H1 (cell line): ENCODE measurements at regions of chr4 and their contacts with region 1.

Region 1: GRCh38 chr4:90419124-90419711 is 292.0 kb downstream of the CCSER1 start:
- DNase-seq: no peak
- H3K4me3 ChIP-seq: no peak overlapping the region
- H3K27ac ChIP-seq: no peak overlapping the region
- H3K4me1 ChIP-seq: no peaks in the 10 kb centered on the region
- H3K27me3 ChIP-seq: no peaks in the 10 kb centered on the region
- CTCF ChIP-seq: peak in 2 of 3 experiments; percentile 25 to 62; a peak in 2 of 4 replicates
- EP300 ChIP-seq: no peak
- POLR2A ChIP-seq: no peak
- RAD21 ChIP-seq: peak; percentile 78 to 85

Region 2: DNA sequence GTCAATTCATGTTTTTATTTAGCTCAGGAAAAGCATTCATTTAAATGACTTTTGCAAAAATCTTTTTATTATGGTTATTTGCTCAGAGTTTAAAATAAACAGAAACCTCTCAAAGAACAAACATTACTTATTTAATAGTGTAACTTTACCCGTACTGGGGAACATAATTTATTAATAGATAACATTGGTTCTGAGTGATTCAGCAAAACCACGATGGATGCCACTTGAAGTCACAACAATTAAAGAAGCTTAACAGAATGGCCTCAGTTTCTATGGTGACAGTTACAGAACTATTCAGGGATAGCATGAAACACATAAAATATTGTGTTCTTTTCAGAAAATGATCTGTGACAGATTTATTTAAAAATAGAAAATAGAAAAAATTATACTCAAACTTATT is 76.7 kb after region 1 on chr4:
- CTCF ChIA-PET with region 1: no interaction called
- POLR2A ChIA-PET with region 1: no interaction called
- DNase-seq: no peak
- H3K4me3 ChIP-seq: no peak overlapping the region
- H3K27ac ChIP-seq: no peak overlapping the region
- H3K4me1 ChIP-seq: no peaks in the 10 kb centered on the region
- H3K27me3 ChIP-seq: no peaks in the 10 kb centered on the region
- CTCF ChIP-seq: no peak
- EP300 ChIP-seq: no peak
- POLR2A ChIP-seq: no peak
- RAD21 ChIP-seq: no peak

Region 3: GRCh38 chr4:91113130-91113706 is 694.0 kb after region 1 on chr4:
- CTCF ChIA-PET with region 1: interaction called, 12 read pairs
- POLR2A ChIA-PET with region 1: no interaction called
- DNase-seq: no peak
- H3K4me3 ChIP-seq: no peak overlapping the region
- H3K27ac ChIP-seq: no peak overlapping the region
- H3K4me1 ChIP-seq: peaks cover 0 to 5% (median 0%) of the 10 kb centered on the region in 4 experiments; a peak in 1 of 7 replicates
- H3K27me3 ChIP-seq: no peaks in the 10 kb centered on the region
- CTCF ChIP-seq: peak in 2 of 3 experiments; percentile 61 to 76; a peak in 3 of 4 replicates
- EP300 ChIP-seq: no peak
- POLR2A ChIP-seq: no peak
- RAD21 ChIP-seq: peak; percentile 95